HepG2 (cell line): ENCODE measurements at regions of chr3 and their contacts with region 1.

Region 1: DNA sequence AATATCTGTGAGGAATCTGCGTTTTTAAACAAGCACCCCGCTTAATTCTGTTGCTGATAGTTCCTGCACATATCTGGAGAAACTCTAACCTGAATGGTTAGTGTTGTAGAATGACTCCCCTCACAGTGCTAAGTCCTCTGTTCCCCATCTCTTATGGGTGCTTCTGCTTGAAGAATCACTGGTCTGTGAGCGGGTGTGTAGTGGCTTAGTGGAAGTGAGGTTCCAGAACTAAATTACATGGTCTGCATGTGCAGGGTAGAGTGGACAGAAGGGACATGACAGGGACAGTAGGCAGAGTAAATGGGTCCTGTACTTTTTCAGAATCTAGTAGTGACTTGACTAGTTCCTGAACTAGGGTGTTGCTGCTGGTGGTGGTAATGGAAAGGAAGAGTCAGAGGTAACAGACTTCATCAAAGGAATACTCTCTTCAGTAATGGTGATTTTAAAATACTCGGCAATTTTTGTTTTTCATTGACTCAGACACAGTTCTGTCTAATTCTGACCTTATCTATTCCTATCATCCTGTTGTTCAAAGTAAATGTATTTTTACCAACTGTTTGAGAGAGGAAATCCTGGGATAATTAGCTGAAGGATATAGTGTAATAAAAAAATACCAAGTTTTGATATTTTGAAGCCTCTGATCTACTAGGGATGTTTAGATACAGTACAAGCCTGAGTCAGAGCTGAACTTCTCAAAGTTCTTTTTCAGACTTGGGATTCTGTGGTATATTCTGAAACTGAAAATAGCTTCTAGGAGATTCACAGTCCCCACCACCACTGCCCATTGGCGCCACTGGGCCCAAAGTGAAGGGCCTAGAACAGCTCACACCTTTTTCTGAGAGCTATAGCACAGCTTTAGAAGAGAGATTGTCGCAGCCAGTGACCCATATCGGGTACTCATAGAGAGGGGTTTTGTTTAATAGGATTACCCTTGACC is 55.5 kb downstream of the FNDC3B start:
- DNase-seq: no peak
- ATAC-seq: peak; percentile 18
- H3K4me3 ChIP-seq: no peak overlapping the region
- H3K27ac ChIP-seq: peak overlapping the region; percentile 47
- H3K4me1 ChIP-seq: peaks cover 100% of the 10 kb centered on the region
- H3K27me3 ChIP-seq: no peaks in the 10 kb centered on the region
- CTCF ChIP-seq: no peak
- EP300 ChIP-seq: no peak
- POLR2A ChIP-seq: peak in 1 of 2 experiments; percentile 42; a peak in 1 of 4 replicates
- RAD21 ChIP-seq: no peak

Region 2: DNA sequence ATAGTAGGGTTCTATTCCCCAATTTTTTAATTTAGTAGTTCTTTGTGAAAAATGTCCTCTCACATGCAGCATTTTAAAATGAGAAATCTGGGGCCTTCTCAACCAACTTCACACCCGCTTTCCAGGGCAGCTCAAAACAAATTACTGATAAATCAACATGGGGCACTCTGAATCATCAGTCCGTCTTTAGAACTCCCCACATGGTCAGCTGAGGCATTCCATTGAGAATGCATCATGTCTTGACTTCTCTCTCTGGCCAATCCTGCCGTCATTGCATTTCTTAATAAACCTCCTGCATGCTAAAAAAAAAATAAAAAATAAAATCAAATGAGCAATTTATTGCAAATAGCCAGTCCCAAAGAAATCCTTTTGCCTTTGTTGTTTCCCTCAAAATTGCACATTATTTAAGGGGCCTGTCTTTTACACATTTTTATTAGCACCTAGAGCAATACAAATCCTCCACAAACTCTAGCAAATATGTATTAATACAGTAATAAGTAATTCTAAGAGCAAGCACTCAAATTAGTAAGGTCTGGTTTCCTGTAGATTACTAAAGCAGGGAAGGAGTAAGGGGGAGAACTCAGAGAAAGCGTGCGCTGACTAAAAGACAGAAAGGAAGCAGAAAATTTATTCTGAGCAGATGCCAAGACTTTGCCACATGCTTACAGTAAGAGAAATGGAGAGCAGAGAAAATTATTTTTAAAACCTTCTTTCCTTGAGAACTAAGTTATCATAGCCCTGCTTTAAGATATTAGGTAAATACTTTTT is 810.4 kb before region 1 on chr3:
- CTCF ChIA-PET with region 1: no interaction called
- POLR2A ChIA-PET with region 1: no interaction called
- in situ Hi-C with region 1: no loop called
- intact Hi-C with region 1: loop called (anchors 5 kb)
- DNase-seq: no peak
- ATAC-seq: no peak
- H3K4me3 ChIP-seq: no peak overlapping the region
- H3K27ac ChIP-seq: no peak overlapping the region
- H3K4me1 ChIP-seq: no peaks in the 10 kb centered on the region
- H3K27me3 ChIP-seq: no peaks in the 10 kb centered on the region
- CTCF ChIP-seq: no peak
- EP300 ChIP-seq: no peak
- POLR2A ChIP-seq: no peak
- RAD21 ChIP-seq: no peak